ENCODE measurements at regions of chr11 and their contacts with region 1.

Region 1: GRCh38 chr11:107598225-107599139 is 7.5 kb downstream of the ELMOD1 start:
- DNase-seq: peak; percentile 26
- ATAC-seq: peak; percentile 100
- H3K4me3 ChIP-seq: no peak overlapping the region
- H3K27ac ChIP-seq: no peak overlapping the region
- H3K4me1 ChIP-seq: peaks cover 0 to 4% of the 10 kb centered on the region in 2 experiments; a peak in 1 of 4 replicates
- H3K27me3 ChIP-seq: no peaks in the 10 kb centered on the region
- CTCF ChIP-seq: peak; percentile 37 to 83 (median 68); a peak in 4 of 6 replicates
- POLR2A ChIP-seq: no peak
- RAD21 ChIP-seq: peak; percentile 47; the same call in 1 of the 2 replicates

Region 2: GRCh38 chr11:107354780-107355179 is 243.7 kb before region 1 on chr11:
- CTCF ChIA-PET with region 1: no interaction called
- POLR2A ChIA-PET with region 1: no interaction called
- RAD21 ChIA-PET with region 1: no interaction called
- intact Hi-C with region 1: no loop called
- DNase-seq: no peak
- ATAC-seq: no peak
- H3K4me3 ChIP-seq: no peak overlapping the region
- H3K27ac ChIP-seq: no peak overlapping the region
- H3K4me1 ChIP-seq: no peaks in the 10 kb centered on the region
- H3K27me3 ChIP-seq: no peaks in the 10 kb centered on the region
- CTCF ChIP-seq: no peak
- POLR2A ChIP-seq: no peak
- RAD21 ChIP-seq: no peak

Region 3: DNA sequence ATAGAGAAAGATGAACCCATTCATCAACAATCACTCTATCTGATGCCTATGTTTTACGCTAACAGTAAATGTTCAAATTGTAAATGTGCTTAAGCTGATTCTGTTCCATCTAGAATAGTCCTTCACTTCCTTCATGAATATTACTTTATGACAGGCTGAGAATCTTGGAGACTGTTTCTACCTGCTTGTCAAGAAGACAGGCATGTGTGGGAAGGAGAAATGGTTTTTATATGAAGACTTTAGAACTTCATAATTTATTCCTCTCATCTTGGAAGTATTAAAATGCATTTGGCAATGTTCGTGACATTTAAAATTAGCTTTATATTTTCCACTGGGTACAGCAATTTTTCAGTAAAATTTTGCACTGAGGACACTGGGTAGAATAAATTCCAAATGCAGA is 33.4 kb after region 1 on chr11:
- CTCF ChIA-PET with region 1: no interaction called
- POLR2A ChIA-PET with region 1: no interaction called
- RAD21 ChIA-PET with region 1: no interaction called
- intact Hi-C with region 1: loop called (anchors 2 kb)
- DNase-seq: no peak
- ATAC-seq: no peak
- H3K4me3 ChIP-seq: no peak overlapping the region
- H3K27ac ChIP-seq: no peak overlapping the region
- H3K4me1 ChIP-seq: no peaks in the 10 kb centered on the region
- H3K27me3 ChIP-seq: no peaks in the 10 kb centered on the region
- CTCF ChIP-seq: no peak
- POLR2A ChIP-seq: no peak
- RAD21 ChIP-seq: no peak

Measured in HCT116 (cell line).